ENCODE measurements at regions of chr3 and their contacts with region 1.

Region 1: DNA sequence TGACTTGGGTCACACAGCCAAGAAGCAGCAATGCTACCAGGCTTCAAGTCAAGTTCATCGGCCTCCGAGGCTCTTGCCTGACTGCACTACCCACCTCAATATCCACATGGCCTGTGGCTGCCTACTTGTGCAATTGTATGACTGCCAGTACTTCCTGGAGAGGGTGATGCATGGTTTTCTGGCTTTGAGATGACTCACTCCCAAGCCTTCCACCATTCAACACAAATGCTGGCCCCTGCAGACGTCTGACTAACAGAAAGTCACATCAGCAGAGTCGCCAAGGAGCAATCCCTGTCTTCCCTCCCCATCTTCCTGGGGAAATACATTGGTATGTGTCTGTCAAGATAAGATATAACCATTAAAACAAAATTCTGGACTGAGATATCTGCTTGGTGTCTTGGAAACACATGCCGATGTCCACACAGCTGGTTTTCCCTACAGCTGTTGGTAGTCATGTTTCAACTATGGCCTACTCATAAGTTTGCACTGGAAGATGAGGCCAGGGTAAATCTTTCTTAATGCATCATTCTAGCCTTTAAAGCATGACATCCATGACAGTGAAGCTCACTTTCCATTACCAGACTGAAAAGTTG is 79.6 kb upstream of the SPATA12 start:
- DNase-seq: peak; percentile 82
- H3K4me3 Mint-ChIP-seq: no peak overlapping the region
- H3K27ac Mint-ChIP-seq: peak overlapping the region; percentile 65
- H3K4me1 Mint-ChIP-seq: peaks cover 25% of the 10 kb centered on the region
- H3K27me3 Mint-ChIP-seq: no peaks in the 10 kb centered on the region

Region 2: GRCh38 chr3:56355570-56356185 is 625.2 kb before region 1 on chr3:
- CTCF ChIA-PET with region 1: no interaction called
- intact Hi-C with region 1: no loop called
- DNase-seq: no peak
- H3K4me3 Mint-ChIP-seq: no peak overlapping the region
- H3K27ac Mint-ChIP-seq: no peak overlapping the region
- H3K4me1 Mint-ChIP-seq: no peaks in the 10 kb centered on the region
- H3K27me3 Mint-ChIP-seq: no peaks in the 10 kb centered on the region

Region 3: DNA sequence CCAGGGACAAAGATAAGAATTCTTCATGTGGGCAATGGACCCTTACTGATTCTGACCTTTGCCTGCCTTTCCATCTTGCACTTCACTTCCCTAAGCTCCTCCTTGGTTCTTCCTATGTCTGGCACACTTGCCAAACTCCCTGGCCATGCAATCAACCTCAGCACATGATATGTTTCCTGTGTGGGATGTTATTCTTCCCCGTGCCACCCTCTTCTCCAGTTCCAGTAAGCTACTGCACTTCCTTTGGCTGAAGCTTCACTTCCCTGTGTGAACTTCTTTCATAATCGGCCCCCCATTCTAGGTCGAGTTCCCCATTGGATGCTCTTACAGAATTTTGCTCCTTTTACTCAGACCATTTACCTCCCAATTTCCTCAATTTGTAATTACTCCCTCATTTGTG is 287.1 kb before region 1 on chr3:
- CTCF ChIA-PET with region 1: no interaction called
- intact Hi-C with region 1: loop called (anchors 1 kb)
- DNase-seq: no peak
- H3K4me3 Mint-ChIP-seq: peak overlapping the region; percentile 26
- H3K27ac Mint-ChIP-seq: peak overlapping the region; percentile 19
- H3K4me1 Mint-ChIP-seq: peaks cover 40% of the 10 kb centered on the region
- H3K27me3 Mint-ChIP-seq: no peaks in the 10 kb centered on the region

Region 4: DNA sequence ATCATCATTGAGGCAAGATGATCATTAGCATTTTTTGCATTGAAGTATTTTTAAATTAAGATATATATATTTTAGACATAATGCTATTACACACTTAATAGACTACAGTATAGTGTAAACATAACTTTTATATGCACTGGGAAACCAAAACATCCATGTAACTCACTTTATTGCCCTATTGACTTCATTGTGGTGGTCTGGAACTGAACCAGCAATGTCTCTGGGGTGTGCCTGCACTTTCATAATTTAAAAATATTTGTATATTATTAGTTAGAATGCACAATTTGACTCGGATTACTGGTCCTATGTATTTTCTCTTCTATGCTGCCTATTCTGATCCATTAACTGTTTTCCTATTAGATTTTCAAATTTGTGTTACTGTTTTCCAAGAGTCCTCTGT is 29.5 kb before region 1 on chr3:
- CTCF ChIA-PET with region 1: no interaction called
- intact Hi-C with region 1: no loop called
- DNase-seq: no peak
- H3K4me3 Mint-ChIP-seq: no peak overlapping the region
- H3K27ac Mint-ChIP-seq: no peak overlapping the region
- H3K4me1 Mint-ChIP-seq: no peaks in the 10 kb centered on the region
- H3K27me3 Mint-ChIP-seq: no peaks in the 10 kb centered on the region

Region 5: DNA sequence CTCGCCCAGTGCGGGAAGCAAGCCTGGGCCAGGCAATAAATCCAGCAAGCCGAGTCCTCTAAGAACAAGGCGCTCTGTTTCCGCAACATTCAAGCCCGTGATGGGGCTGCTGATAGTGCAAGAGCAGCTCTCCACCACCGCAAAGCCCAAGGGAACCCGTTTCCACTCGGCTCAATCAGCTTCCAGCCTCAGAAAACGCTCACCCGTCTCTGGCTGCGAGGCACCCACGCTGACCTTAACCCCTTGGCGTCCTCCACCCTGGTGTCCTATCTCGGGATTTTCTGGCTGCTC is 97.4 kb after region 1 on chr3:
- CTCF ChIA-PET with region 1: no interaction called
- intact Hi-C with region 1: no loop called
- DNase-seq: peak; percentile 40
- H3K4me3 Mint-ChIP-seq: peak overlapping the region; percentile 55
- H3K27ac Mint-ChIP-seq: no peak overlapping the region
- H3K4me1 Mint-ChIP-seq: peaks cover 4% of the 10 kb centered on the region
- H3K27me3 Mint-ChIP-seq: peaks cover 43% of the 10 kb centered on the region

Measured in activated naive CD4-positive, alpha-beta T cell treated with anti-CD3 and anti-CD28 coated beads for 36 hours (primary cell).